PC-3 (cell line): ENCODE measurements at regions of chr10 and their contacts with region 1.

Region 1: DNA sequence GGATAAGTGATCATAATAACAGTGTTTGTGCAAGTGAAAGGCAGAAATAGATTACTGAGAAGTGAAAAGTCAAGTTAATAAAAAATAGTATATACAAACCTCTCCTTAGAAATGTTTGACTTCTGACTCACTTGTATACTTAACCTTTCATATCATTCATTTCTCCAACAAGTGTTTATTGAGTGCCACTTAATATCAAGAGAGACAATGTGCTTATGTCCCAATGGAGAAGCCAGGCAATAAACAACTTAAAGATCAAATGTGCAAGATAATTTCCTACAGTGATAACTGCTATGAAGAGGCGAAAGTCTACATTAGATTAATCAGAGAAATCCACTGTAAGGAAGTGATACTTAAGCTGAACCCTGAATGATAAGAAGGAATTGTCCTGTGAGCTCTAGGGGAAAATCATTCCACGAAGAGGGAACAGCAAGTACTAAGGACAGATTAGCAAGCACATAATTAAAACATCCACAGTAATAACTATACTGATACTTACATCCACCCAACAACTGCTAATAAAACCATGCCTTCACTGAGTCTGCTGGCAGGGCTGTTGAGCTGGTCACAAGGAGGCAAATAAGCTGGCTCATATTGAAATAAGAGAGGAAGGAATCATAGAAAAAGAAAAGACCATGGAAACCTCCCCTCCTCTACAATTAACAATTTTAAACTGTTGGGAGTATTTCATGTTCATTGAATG is 203.5 kb downstream of the CTNNA3 start:
- DNase-seq: peak; percentile 88
- ATAC-seq: peak; percentile 92
- H3K4me3 ChIP-seq: peak overlapping the region; percentile 21
- H3K27ac ChIP-seq: peak overlapping the region; percentile 40
- H3K4me1 ChIP-seq: peaks cover 19% of the 10 kb centered on the region
- H3K27me3 ChIP-seq: no peaks in the 10 kb centered on the region
- CTCF ChIP-seq: no peak

Region 2: GRCh38 chr10:67022099-67022498 is 470.4 kb before region 1 on chr10:
- CTCF ChIA-PET with region 1: no interaction called
- POLR2A ChIA-PET with region 1: no interaction called
- intact Hi-C with region 1: no loop called
- DNase-seq: no peak
- ATAC-seq: no peak
- H3K4me3 ChIP-seq: no peak overlapping the region
- H3K27ac ChIP-seq: no peak overlapping the region
- H3K4me1 ChIP-seq: no peaks in the 10 kb centered on the region
- H3K27me3 ChIP-seq: peaks cover 52% of the 10 kb centered on the region
- CTCF ChIP-seq: no peak

Region 3: GRCh38 chr10:67401711-67402110 is 90.8 kb before region 1 on chr10:
- CTCF ChIA-PET with region 1: no interaction called
- POLR2A ChIA-PET with region 1: no interaction called
- intact Hi-C with region 1: loop called (anchors 5 kb)
- DNase-seq: no peak
- ATAC-seq: no peak
- H3K4me3 ChIP-seq: no peak overlapping the region
- H3K27ac ChIP-seq: no peak overlapping the region
- H3K4me1 ChIP-seq: no peaks in the 10 kb centered on the region
- H3K27me3 ChIP-seq: peaks cover 9% of the 10 kb centered on the region
- CTCF ChIP-seq: no peak